Activated CD8-positive, alpha-beta memory T cell treated with anti-CD3 and anti-CD28 coated beads, Interleukin-2, amount 10 ng/mL, durations not matched to agents 7 days and 5 days (primary cell): ENCODE measurements at regions of chr1 and their contacts with region 1.

Region 1: GRCh38 chr1:244864253-244865027 is at the start of gene HNRNPU:
- DNase-seq: peak; percentile 96
- ATAC-seq: peak; percentile 74
- H3K4me3 Mint-ChIP-seq: peak within 1 kb of the TSS; percentile 97
- H3K27ac Mint-ChIP-seq: peak within 1 kb of the TSS; percentile 99
- H3K4me1 Mint-ChIP-seq: peaks cover 42% of the 10 kb centered on the region
- H3K27me3 Mint-ChIP-seq: no peaks in the 10 kb centered on the region
- total RNA-seq, gene HNRNPU: 410 to 503 TPM

Region 2: DNA sequence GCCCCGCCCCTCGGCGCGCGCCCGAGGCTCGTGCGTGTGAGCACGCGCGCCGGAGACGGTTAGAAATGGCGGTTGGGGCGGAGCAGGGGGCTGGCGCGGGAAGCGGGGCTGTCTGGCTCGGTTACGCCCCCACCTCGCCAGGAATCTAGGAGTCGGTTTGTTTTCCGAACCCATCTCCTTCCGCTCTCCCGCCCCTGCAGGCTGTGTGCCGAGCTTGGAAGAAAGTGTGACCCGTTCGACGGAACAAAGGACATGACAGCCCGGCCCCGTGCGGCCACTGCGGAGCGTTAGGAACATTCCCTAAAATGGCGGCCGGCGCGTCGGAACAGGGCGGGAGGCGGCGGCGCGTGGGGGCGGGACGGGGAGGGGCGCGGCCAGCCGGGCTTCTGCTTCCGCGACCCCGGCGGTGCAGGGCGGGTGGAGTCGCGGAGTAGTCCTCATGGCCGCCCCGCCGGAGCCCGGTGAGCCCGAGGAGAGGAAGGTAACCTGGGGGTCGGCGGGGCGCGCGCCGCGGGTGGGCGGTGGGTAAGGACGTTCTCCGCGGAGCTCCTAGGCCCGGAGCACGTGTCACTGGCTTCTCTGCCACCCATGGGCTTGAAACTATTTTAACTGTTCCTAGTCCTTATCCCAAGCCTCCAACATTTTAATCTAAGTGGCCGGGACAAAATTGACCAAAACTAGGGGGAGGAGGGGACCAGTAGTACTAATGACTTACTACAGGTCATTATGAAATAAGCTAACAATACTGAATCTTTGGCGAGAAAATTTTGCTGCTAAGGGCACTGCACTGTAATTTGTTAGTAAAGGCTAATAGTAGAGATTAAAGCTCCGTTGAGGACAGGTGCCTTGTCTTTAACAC is 28.9 kb before region 1 on chr1 and contains the start of gene COX20:
- CTCF ChIA-PET with region 1: interaction called, 49 read pairs
- DNase-seq: peak; percentile 91
- ATAC-seq: peak; percentile 74
- H3K4me3 Mint-ChIP-seq: peak within 1 kb of the TSS; percentile 92
- H3K27ac Mint-ChIP-seq: peak within 1 kb of the TSS; percentile 100
- H3K4me1 Mint-ChIP-seq: peaks cover 54% of the 10 kb centered on the region
- H3K27me3 Mint-ChIP-seq: no peaks in the 10 kb centered on the region
- total RNA-seq, gene COX20: 21.6 to 26.3 TPM

Region 3: DNA sequence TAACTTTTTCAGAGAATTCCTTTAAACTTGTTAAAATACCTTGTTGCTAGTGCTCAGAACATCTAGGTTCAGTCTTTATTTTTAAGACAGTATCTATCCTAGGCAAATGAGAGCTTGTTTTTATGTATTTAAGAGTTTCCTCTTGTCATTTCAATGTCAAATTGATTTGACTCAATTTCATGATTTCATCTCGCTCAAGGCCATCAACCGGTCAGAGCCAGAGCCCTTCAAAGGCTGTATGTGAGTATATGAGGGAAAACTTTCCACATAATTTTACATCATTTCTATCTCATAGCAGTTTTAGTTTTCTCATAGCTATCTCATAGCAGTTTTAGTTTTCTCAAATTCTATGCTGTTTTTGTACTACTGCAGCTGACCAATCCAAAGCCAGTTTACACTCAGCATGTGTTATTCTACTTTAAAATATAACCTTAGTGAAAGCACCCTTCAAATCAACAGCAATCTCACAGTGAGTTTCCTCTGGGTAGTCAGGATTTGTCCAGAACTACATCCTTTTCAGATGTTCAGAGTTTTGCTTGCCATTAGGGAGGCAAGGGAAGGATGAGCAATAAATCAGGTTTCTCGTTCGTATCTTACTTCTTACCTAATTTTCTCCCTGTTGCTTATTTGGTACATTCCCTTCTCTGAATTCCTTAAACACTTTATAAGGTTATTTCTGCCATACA is 12.8 kb before region 1 on chr1:
- CTCF ChIA-PET with region 1: interaction called, 11 read pairs
- DNase-seq: no peak
- ATAC-seq: no peak
- H3K4me3 Mint-ChIP-seq: no peak overlapping the region
- H3K27ac Mint-ChIP-seq: peak overlapping the region; percentile 26
- H3K4me1 Mint-ChIP-seq: peaks cover 59% of the 10 kb centered on the region
- H3K27me3 Mint-ChIP-seq: no peaks in the 10 kb centered on the region

Region 4: GRCh38 chr1:244970661-244971551 is 106.5 kb after region 1 on chr1:
- CTCF ChIA-PET with region 1: interaction called, 11 read pairs
- DNase-seq: peak; percentile 94
- ATAC-seq: peak; percentile 81
- H3K4me3 Mint-ChIP-seq: peak overlapping the region; percentile 87
- H3K27ac Mint-ChIP-seq: peak overlapping the region; percentile 98
- H3K4me1 Mint-ChIP-seq: peaks cover 16% of the 10 kb centered on the region
- H3K27me3 Mint-ChIP-seq: no peaks in the 10 kb centered on the region